ENCODE measurements at regions of chr19 and their contacts with region 1.

Region 1: DNA sequence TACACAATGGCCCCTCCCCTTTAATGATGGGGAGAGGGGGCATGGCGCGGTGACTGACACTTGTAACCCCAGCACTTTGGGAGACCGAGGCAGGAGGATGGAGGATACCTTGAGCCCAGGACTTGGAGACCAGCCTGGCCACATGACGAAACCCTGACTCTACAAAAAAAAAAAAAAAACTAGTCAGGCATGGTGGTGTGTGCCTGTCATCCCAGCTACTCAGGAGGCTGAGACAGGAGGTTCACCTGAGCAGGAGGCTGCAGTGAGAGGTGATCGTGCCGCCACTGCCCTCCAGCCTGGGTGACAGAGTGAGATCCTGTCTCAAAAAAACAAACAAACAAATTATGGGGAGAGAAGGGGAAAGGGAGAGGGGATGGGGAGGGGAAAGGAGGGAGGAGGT is 13.8 kb upstream of the ZBTB7A start:
- DNase-seq: no peak
- H3K4me3 ChIP-seq: no peak overlapping the region
- H3K27ac ChIP-seq: no peak overlapping the region
- H3K4me1 ChIP-seq: peaks cover 10% of the 10 kb centered on the region
- H3K27me3 ChIP-seq: no peaks in the 10 kb centered on the region
- CTCF ChIP-seq: no peak

Region 2: GRCh38 chr19:4115050-4115817 is 34.8 kb after region 1 on chr19:
- CTCF ChIA-PET with region 1: interaction called, 17 read pairs
- dilution Hi-C with region 1: no loop called
- in situ Hi-C with region 1: no loop called
- intact Hi-C with region 1: no loop called
- DNase-seq: no peak
- H3K4me3 ChIP-seq: no peak overlapping the region
- H3K27ac ChIP-seq: no peak overlapping the region
- H3K4me1 ChIP-seq: peaks cover 5% of the 10 kb centered on the region
- H3K27me3 ChIP-seq: no peaks in the 10 kb centered on the region
- CTCF ChIP-seq: no peak

Region 3: DNA sequence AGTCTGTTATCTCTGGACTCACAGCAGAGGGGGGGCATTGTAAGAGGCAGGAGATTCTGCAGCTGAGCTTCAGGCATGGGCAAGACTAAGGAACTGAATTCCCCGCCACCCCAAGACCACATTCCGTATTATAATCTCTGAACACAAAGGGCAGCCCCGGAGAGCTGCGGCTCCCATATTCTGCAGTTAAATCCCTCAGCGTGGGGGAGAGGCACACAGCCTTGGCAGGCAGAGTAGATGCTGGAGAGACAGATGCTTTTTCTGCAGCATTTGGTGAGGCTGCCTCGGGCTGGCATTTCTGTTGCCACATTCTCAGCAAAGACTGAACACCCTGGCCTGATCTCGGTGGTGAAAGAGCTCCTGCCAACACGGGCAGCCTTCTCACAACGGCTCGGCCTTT is 334.9 kb after region 1 on chr19:
- CTCF ChIA-PET with region 1: no interaction called
- dilution Hi-C with region 1: no loop called
- in situ Hi-C with region 1: no loop called
- intact Hi-C with region 1: no loop called
- DNase-seq: no peak
- H3K4me3 ChIP-seq: no peak overlapping the region
- H3K27ac ChIP-seq: no peak overlapping the region
- H3K4me1 ChIP-seq: no peaks in the 10 kb centered on the region
- H3K27me3 ChIP-seq: no peaks in the 10 kb centered on the region
- CTCF ChIP-seq: no peak

Measured in mammary epithelial cell (primary cell).